ENCODE measurements at regions of chr2 and their contacts with region 1.

Region 1: GRCh38 chr2:144516981-144517865 is 2.7 kb downstream of the ZEB2 start:
- DNase-seq: peak; percentile 51 to 78
- ATAC-seq: peak; percentile 71 to 80 (median 75)
- H3K4me3 ChIP-seq: peak overlapping the region; percentile 89
- H3K27ac ChIP-seq: peak overlapping the region; percentile 96
- H3K4me1 ChIP-seq: peaks cover 17% of the 10 kb centered on the region
- H3K27me3 ChIP-seq: no peaks in the 10 kb centered on the region
- CTCF ChIP-seq: no peak

Region 2: DNA sequence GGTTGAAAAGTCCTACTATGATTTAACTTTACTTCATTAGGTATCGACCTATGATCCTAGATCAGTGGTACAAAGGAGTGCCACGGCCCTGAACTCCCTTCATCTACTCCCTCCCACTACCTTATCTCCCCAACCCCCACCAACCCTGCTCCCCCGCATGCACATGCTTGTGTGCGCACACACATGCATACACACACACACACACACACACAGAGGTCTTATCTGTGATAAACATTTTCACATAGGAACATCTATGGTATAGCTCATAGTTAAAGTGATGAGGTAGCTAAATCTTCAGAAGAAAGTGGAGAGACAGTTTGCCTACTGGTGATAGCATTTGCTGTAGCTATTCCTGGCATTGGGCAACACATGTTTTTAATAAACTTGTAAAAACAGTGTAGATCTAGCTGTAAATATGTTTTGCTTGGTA is 468.6 kb before region 1 on chr2:
- intact Hi-C with region 1: no loop called
- DNase-seq: no peak
- ATAC-seq: no peak
- H3K4me3 ChIP-seq: no peak overlapping the region
- H3K27ac ChIP-seq: no peak overlapping the region
- H3K4me1 ChIP-seq: peaks cover 10% of the 10 kb centered on the region
- H3K27me3 ChIP-seq: no peaks in the 10 kb centered on the region
- CTCF ChIP-seq: no peak

Region 3: GRCh38 chr2:144152817-144153271 is 364.4 kb before region 1 on chr2:
- intact Hi-C with region 1: loop called in 1 of 2 experiments (anchors 10 kb)
- DNase-seq: no peak
- ATAC-seq: peak in 1 of 4 donors; percentile 24
- H3K4me3 ChIP-seq: no peak overlapping the region
- H3K27ac ChIP-seq: no peak overlapping the region
- H3K4me1 ChIP-seq: peaks cover 8% of the 10 kb centered on the region
- H3K27me3 ChIP-seq: no peaks in the 10 kb centered on the region
- CTCF ChIP-seq: no peak

Region 4: GRCh38 chr2:144332356-144333142 is 184.7 kb before region 1 on chr2:
- intact Hi-C with region 1: loop called (anchors 5 kb)
- DNase-seq: peak; percentile 89 to 94
- ATAC-seq: peak; percentile 92 to 95 (median 94)
- H3K4me3 ChIP-seq: peak overlapping the region; percentile 74
- H3K27ac ChIP-seq: peak overlapping the region; percentile 85
- H3K4me1 ChIP-seq: peaks cover 25% of the 10 kb centered on the region
- H3K27me3 ChIP-seq: no peaks in the 10 kb centered on the region
- CTCF ChIP-seq: no peak

Region 5: DNA sequence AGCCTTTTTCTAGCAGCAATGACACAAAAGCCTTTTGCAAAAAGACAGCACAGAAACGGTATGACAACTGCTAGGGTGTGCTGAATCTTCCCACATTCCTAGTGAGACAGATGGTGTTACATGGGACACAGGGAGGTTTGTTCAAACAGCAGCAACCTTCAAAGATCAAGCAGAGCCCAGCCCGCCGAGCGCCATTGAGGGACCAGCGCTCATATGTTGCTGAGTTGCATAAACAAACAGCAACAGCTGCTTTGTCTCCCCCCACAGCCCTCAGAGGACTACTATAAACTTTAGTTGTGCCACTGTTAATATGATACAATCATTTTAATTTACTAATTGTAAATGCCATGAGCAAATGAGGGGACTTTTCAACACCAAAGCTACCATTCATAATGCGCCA is 115.0 kb before region 1 on chr2:
- intact Hi-C with region 1: loop called in 1 of 2 experiments (anchors 10 kb)
- DNase-seq: peak in 1 of 2 donors; percentile 39
- ATAC-seq: no peak
- H3K4me3 ChIP-seq: no peak overlapping the region
- H3K27ac ChIP-seq: peak overlapping the region; percentile 18
- H3K4me1 ChIP-seq: peaks cover 15% of the 10 kb centered on the region
- H3K27me3 ChIP-seq: no peaks in the 10 kb centered on the region
- CTCF ChIP-seq: no peak

Region 6: GRCh38 chr2:144560251-144560650 is 43.0 kb after region 1 on chr2:
- intact Hi-C with region 1: no loop called
- DNase-seq: no peak
- ATAC-seq: no peak
- H3K4me3 ChIP-seq: no peak overlapping the region
- H3K27ac ChIP-seq: no peak overlapping the region
- H3K4me1 ChIP-seq: no peaks in the 10 kb centered on the region
- H3K27me3 ChIP-seq: no peaks in the 10 kb centered on the region
- CTCF ChIP-seq: no peak

Region 7: GRCh38 chr2:144645083-144645778 is 128.0 kb after region 1 on chr2:
- intact Hi-C with region 1: loop called in 1 of 2 experiments (anchors 10 kb)
- DNase-seq: no peak
- ATAC-seq: no peak
- H3K4me3 ChIP-seq: no peak overlapping the region
- H3K27ac ChIP-seq: no peak overlapping the region
- H3K4me1 ChIP-seq: no peaks in the 10 kb centered on the region
- H3K27me3 ChIP-seq: no peaks in the 10 kb centered on the region
- CTCF ChIP-seq: no peak

Region 8: GRCh38 chr2:144738749-144739148 is 221.5 kb after region 1 on chr2:
- intact Hi-C with region 1: no loop called
- DNase-seq: no peak
- ATAC-seq: no peak
- H3K4me3 ChIP-seq: no peak overlapping the region
- H3K27ac ChIP-seq: no peak overlapping the region
- H3K4me1 ChIP-seq: no peaks in the 10 kb centered on the region
- H3K27me3 ChIP-seq: no peaks in the 10 kb centered on the region
- CTCF ChIP-seq: no peak

Measured in psoas muscle (tissue), 8 donors.